ENCODE measurements at regions of chr16 and their contacts with region 1.

Region 1: GRCh38 chr16:81873843-81874752 is 95.0 kb downstream of the PLCG2 start:
- DNase-seq: peak; percentile 77
- ATAC-seq: peak; percentile 85
- H3K4me3 Mint-ChIP-seq: no peak overlapping the region
- H3K27ac Mint-ChIP-seq: peak overlapping the region; percentile 30
- H3K4me1 Mint-ChIP-seq: peaks cover 25% of the 10 kb centered on the region
- H3K27me3 Mint-ChIP-seq: no peaks in the 10 kb centered on the region
- CTCF ChIP-seq: peak; percentile 80

Region 2: DNA sequence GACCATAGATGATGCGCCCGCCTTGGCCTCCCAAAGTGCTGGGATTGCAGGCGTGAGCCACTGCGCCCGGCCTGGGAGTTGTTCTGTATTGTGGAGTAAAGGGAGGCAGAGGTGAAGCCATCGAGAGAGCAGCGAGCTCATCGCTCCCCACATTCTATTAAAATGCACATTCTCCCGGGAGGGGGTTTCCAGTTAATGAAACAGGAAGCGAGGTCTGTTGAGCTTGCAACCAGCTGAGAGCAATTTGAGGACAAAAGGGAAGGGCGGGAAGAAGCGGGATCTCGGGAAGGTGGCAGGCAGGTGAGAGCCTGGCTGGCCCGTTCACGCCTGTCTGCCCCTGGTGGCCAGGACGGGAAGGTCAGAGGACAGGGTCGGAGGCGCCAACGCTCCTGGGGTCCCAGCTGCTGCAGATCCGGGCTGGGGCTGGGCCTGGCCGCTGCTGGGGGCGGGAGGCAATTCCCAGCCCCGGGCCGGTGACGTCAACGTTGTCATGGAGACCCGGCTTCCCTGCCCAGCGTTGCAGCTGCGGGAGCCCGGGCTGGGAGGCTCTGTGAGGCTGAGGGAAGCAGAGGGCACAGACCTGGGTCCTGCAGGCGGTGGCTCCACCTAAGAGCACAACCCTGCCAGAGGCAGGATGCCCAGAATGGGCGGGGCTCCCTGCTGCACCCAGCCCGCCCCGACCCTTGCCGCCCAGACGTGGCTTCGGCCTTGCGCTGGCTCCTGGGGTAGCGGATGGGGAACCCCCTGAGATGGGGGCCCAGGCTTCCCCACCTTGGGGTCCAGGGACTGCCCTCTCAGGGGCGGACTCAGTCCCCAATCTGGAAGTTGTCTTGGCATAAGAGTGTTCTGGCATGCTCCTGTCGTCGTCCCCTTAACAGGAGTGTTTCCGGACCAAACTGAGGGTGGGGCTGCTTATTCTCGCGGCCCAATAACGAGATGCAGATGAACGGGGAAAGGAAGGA is 143.7 kb before region 1 on chr16:
- CTCF ChIA-PET with region 1: interaction called, 17 read pairs
- POLR2A ChIA-PET with region 1: no interaction called
- DNase-seq: peak; percentile 99
- ATAC-seq: peak; percentile 96
- H3K4me3 Mint-ChIP-seq: peak overlapping the region; percentile 64
- H3K27ac Mint-ChIP-seq: peak overlapping the region; percentile 96
- H3K4me1 Mint-ChIP-seq: peaks cover 30% of the 10 kb centered on the region
- H3K27me3 Mint-ChIP-seq: no peaks in the 10 kb centered on the region
- CTCF ChIP-seq: peak; percentile 80

Region 3: GRCh38 chr16:81748476-81749198 is 125.5 kb before region 1 on chr16:
- CTCF ChIA-PET with region 1: interaction called, 15 read pairs
- POLR2A ChIA-PET with region 1: no interaction called
- DNase-seq: no peak
- ATAC-seq: peak; percentile 45
- H3K4me3 Mint-ChIP-seq: no peak overlapping the region
- H3K27ac Mint-ChIP-seq: no peak overlapping the region
- H3K4me1 Mint-ChIP-seq: peaks cover 19% of the 10 kb centered on the region
- H3K27me3 Mint-ChIP-seq: peaks cover 5% of the 10 kb centered on the region
- CTCF ChIP-seq: no peak

Region 4: GRCh38 chr16:81841722-81842121 is 32.4 kb before region 1 on chr16:
- CTCF ChIA-PET with region 1: interaction called, 13 read pairs
- POLR2A ChIA-PET with region 1: no interaction called
- DNase-seq: no peak
- ATAC-seq: no peak
- H3K4me3 Mint-ChIP-seq: no peak overlapping the region
- H3K27ac Mint-ChIP-seq: no peak overlapping the region
- H3K4me1 Mint-ChIP-seq: peaks cover 9% of the 10 kb centered on the region
- H3K27me3 Mint-ChIP-seq: no peaks in the 10 kb centered on the region
- CTCF ChIP-seq: no peak

Region 5: GRCh38 chr16:81855552-81856153 is 18.4 kb before region 1 on chr16:
- CTCF ChIA-PET with region 1: interaction called, 17 read pairs
- POLR2A ChIA-PET with region 1: no interaction called
- DNase-seq: peak; percentile 53
- ATAC-seq: peak; percentile 93
- H3K4me3 Mint-ChIP-seq: no peak overlapping the region
- H3K27ac Mint-ChIP-seq: no peak overlapping the region
- H3K4me1 Mint-ChIP-seq: no peaks in the 10 kb centered on the region
- H3K27me3 Mint-ChIP-seq: no peaks in the 10 kb centered on the region; the same call in none of the 2 replicates
- CTCF ChIP-seq: no peak

Region 6: DNA sequence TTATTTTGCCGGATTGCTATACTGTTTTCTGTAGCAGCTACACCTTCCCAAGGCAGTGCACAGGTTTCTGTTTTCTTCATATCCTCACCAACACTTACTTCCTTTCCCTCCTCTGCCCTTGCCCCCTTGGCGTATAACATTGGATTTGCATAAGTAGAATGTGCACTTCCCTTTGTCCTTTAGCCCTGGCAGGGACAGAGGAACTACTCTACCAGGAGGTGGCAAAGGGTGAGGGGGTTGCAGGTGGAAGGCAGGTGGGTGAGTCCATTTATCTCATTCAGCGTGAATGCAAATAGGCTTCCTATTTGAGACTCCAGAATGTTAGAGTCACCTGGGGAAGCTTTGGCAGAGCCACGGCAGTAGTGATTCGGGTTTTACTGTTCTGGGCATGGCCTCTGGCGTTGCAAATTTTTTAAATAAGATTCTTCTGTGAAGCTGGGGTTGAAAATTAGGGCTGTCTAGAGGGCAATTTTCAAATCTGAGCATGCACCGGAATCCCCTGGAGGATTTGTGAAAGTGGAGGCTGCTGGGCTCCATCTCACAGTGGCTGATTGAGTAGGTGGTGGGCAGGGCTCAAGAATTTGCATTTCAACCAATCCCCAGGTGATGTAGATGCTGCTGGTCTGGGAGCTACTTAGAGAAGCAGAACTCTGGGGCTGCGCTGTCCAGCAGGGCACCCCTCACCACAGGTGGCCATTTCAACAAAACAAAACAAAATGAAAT is 10.3 kb before region 1 on chr16:
- CTCF ChIA-PET with region 1: interaction called, 36 read pairs
- POLR2A ChIA-PET with region 1: interaction called, 3 read pairs
- DNase-seq: peak; percentile 24
- ATAC-seq: peak; percentile 84
- H3K4me3 Mint-ChIP-seq: peak overlapping the region; percentile 41
- H3K27ac Mint-ChIP-seq: no peak overlapping the region
- H3K4me1 Mint-ChIP-seq: peaks cover 24% of the 10 kb centered on the region
- H3K27me3 Mint-ChIP-seq: peaks cover 7% of the 10 kb centered on the region
- CTCF ChIP-seq: no peak

Region 7: DNA sequence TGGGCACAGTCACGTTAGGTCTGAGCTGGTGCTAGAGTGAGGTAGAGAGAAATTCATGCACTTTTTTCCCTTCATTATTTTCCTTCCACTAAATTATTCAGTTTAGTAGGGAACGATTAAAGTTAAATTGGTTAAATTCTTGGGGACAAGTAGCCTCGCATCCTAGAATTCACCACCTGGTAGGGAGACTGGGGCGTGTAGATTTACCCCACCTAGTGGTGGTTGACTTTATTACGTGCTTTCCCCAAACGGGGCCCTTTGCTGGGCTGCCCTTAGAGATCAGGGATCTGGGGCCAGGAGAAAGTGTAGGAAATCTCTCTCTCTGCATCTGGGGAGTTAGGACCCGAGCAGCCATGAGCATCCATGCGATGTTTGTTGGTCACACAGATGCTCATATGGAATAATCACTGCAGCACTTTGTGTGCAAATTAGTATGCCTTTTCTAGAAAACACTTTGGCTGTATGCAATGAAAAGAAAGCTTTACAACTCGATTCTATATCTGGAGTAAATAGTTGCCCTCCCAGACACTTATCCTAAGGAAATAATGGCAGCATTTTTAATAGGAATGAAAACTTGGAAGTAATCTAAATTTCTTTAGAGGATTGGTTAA is 12.0 kb after region 1 on chr16:
- CTCF ChIA-PET with region 1: interaction called, 19 read pairs
- POLR2A ChIA-PET with region 1: no interaction called
- DNase-seq: peak; percentile 60
- ATAC-seq: peak; percentile 86
- H3K4me3 Mint-ChIP-seq: no peak overlapping the region
- H3K27ac Mint-ChIP-seq: no peak overlapping the region
- H3K4me1 Mint-ChIP-seq: no peaks in the 10 kb centered on the region
- H3K27me3 Mint-ChIP-seq: no peaks in the 10 kb centered on the region
- CTCF ChIP-seq: peak; percentile 70

Region 8: DNA sequence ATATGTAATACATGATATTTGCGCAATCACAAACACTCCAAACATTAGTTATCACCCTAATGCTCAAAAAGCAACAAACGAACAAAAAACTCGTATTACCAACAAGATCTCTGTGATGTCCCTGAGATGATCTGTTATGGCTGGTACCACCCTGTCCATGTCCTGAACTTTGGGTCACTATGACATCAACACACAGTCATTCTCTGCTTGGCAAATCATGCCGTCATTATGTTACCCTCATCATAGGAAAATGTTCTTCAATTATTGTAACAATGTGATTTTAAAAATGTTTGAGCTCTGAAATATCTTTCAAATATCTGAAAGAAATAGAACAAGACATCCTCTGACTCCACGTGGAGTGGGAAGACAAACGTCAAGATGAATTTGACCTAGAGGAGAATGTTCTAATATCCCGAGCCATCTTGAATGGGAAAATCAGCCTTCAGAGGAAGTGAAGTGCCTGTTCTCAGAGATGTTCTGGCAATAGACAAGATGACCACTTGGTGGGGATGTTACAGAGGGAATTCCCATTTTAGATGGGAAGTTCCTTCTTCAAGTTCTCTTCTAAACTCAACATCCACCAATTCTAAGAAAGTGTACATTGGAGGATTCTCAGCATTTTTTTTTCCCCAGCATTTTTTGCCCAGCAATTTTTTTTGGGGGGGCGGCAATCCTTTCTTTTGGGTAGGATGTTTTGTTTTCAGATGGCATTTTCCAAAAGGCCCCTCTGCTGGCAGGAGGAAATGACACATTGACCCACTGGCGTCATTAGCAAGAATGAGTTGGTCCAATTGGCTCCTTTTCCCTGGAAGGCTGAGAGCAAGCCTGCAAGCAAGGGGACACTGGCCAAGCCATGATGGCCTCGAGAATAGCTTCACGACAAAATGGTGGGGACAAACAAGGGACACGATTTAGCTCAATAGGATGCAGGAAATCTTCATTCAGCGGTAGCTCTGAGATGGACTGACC is 157.3 kb after region 1 on chr16:
- CTCF ChIA-PET with region 1: no interaction called
- POLR2A ChIA-PET with region 1: no interaction called
- DNase-seq: no peak
- ATAC-seq: peak; percentile 67
- H3K4me3 Mint-ChIP-seq: no peak overlapping the region
- H3K27ac Mint-ChIP-seq: no peak overlapping the region
- H3K4me1 Mint-ChIP-seq: no peaks in the 10 kb centered on the region; the same call in 1 of the 2 replicates
- H3K27me3 Mint-ChIP-seq: no peaks in the 10 kb centered on the region
- CTCF ChIP-seq: peak; percentile 13; the same call in 1 of the 2 replicates

Measured in WTC11 (cell line).